GM10248 (cell line): ENCODE measurements at regions of chr1 and their contacts with region 1.

Region 1: GRCh38 chr1:8848663-8849386 is 29.7 kb downstream of the ENO1 start:
- DNase-seq: peak; percentile 91
- CTCF ChIP-seq: peak; percentile 85

Region 2: GRCh38 chr1:8660411-8660828 is 188.4 kb before region 1 on chr1:
- CTCF ChIA-PET with region 1: interaction called, 16 read pairs
- POLR2A ChIA-PET with region 1: no interaction called
- DNase-seq: no peak
- CTCF ChIP-seq: no peak

Region 3: DNA sequence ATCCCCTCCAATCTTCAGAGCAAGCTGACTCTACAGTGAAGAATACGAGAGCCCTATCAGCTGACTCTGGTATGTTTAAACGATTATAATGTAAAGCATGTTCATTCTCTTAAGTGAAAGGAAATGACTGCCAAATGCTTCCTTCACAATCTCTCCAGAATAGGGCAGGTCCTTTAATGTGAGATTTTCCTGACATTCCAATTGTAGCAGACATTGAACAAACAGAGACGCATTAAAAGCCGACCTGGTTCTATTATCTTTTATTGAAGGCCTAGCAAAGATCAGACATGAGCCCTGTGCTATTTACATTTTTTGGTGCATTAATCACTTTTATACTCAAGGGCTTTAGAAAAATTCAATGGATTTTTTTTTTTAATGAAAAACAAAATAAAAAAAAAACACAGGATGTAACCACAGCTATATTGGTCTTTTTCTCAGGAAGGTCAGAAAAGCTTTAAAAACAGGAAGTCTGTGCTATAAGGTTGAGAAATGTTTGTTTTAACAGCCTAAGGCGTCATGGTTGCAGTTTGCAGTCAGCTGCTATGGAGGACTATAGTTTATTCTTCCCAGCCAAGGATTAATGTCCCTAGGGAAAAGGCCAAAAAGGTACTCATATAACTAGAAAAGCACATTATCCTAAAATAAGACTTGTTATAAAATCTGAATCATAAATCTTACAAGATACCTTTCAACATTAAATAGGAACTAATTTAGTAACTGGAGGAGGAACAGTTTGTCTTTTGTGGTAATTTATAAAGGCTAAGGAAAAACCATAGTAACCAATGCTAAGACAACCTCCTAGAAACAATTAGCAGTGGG is 136.2 kb before region 1 on chr1:
- CTCF ChIA-PET with region 1: interaction called, 31 read pairs
- POLR2A ChIA-PET with region 1: no interaction called
- DNase-seq: no peak
- CTCF ChIP-seq: no peak

Region 4: GRCh38 chr1:8816831-8817405 is 31.9 kb before region 1 on chr1:
- CTCF ChIA-PET with region 1: interaction called, 41 read pairs
- POLR2A ChIA-PET with region 1: no interaction called
- DNase-seq: peak; percentile 33
- CTCF ChIP-seq: no peak

Region 5: DNA sequence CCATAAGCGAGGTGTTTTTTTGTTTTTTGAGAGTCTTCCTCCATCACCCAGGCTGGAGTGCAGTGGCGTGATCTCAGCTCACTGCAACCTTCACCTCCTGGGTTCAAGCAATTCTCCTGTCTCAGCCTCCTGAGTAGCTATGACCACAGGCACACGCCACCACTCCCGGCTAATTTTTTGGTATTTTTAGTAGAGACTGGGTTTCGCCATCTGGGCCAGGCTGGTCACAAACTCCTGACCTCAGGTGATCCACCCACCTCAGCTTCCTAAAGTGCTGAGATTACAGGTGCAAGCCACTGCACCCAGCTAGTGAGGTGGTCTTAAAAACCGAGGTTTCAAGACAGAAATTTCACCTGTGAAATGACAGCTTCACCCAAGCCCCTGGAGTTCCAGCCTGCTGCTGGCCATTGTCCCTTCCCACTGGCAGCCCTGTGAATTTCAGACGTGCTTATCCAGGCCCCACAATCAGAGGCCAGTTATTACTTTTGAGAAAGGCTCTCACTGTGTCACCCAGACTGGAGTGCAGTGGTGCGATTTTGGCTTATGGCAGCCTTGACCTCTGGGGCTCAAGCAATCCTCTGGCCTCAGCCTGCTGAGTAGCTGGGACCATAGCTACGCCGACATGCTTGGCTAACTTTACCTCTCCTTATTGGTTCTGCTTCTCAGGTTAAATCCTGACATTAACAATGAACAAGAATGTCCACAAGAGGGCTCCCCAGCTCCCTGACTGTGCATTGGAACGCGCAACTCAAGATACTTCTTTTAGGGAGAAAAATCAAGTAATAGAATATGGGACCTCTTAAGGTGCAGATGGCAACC is 10.3 kb after region 1 on chr1:
- CTCF ChIA-PET with region 1: interaction called, 89 read pairs
- POLR2A ChIA-PET with region 1: interaction called, 6 read pairs
- DNase-seq: peak; percentile 46
- CTCF ChIP-seq: peak; percentile 65

Region 6: GRCh38 chr1:9269078-9269501 is 420.3 kb after region 1 on chr1:
- CTCF ChIA-PET with region 1: no interaction called
- POLR2A ChIA-PET with region 1: no interaction called
- DNase-seq: no peak
- CTCF ChIP-seq: no peak